ENCODE measurements at regions of chr2 and their contacts with region 1.

Region 1: DNA sequence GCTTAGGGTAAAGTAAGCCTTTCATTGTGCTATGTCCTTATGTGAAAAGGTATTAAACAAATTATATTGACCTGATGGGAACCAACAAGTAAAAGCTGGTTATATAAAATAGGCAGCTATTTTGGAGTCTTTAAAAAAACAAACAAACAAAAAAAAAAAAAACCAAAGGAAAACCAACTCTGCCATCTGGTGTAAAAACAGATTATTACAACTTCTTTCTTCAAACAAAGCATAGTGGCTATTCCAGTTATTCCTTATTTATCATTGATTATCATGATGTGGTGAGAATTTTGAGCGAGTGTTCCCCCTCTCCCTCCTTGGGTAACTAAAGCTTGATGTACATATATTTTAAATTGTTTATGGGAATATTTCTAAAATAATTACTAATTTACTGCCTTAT is 122.4 kb upstream of the FHL2 start:
- DNase-seq: peak; percentile 15
- ATAC-seq: peak; percentile 43
- H3K4me3 ChIP-seq: no peak overlapping the region
- H3K27ac ChIP-seq: no peak overlapping the region
- H3K4me1 ChIP-seq: peaks cover 2% of the 10 kb centered on the region; the same call in 1 of the 2 replicates
- H3K27me3 ChIP-seq: peaks cover 7% of the 10 kb centered on the region; the same call in 1 of the 2 replicates
- CTCF ChIP-seq: peak; percentile 62
- POLR2A ChIP-seq: no peak
- RAD21 ChIP-seq: peak; percentile 76

Region 2: DNA sequence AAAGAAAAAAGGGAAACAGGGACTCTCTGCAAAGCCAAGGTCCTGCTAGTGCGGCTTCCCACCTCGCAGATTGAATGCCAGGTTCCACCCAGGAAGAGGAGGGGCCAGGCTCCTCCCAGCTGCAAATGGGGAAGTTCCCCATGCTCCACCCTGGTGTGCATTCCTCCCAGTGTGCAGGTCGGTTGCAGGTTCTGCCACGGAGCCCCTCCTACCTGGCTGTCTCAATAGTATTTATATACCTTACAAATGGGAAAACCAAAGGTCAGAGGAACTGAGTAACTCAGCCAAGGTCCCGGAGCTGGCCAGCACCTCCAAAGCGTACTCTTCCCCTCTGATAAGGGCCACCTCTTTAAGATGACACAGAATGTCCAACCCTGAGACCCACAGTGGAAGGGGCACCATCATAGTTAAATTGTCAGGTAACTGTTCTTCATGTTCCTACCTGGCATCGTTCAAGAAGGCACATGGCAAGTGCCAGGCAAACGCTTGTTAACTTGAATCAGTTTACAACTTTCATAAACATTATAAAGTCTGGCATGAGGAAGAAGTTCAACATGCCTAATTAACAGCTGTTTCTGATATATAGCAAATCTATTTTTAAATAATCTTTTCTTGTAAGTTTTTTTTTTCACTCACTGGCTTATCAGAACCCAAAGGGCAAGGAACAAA is 631.8 kb before region 1 on chr2:
- CTCF ChIA-PET with region 1: no interaction called
- POLR2A ChIA-PET with region 1: no interaction called
- dilution Hi-C with region 1: no loop called
- in situ Hi-C with region 1: no loop called
- intact Hi-C with region 1: no loop called
- DNase-seq: no peak
- ATAC-seq: no peak
- H3K4me3 ChIP-seq: no peak overlapping the region
- H3K27ac ChIP-seq: no peak overlapping the region
- H3K4me1 ChIP-seq: no peaks in the 10 kb centered on the region
- H3K27me3 ChIP-seq: no peaks in the 10 kb centered on the region
- CTCF ChIP-seq: no peak
- POLR2A ChIP-seq: no peak
- RAD21 ChIP-seq: no peak

Region 3: DNA sequence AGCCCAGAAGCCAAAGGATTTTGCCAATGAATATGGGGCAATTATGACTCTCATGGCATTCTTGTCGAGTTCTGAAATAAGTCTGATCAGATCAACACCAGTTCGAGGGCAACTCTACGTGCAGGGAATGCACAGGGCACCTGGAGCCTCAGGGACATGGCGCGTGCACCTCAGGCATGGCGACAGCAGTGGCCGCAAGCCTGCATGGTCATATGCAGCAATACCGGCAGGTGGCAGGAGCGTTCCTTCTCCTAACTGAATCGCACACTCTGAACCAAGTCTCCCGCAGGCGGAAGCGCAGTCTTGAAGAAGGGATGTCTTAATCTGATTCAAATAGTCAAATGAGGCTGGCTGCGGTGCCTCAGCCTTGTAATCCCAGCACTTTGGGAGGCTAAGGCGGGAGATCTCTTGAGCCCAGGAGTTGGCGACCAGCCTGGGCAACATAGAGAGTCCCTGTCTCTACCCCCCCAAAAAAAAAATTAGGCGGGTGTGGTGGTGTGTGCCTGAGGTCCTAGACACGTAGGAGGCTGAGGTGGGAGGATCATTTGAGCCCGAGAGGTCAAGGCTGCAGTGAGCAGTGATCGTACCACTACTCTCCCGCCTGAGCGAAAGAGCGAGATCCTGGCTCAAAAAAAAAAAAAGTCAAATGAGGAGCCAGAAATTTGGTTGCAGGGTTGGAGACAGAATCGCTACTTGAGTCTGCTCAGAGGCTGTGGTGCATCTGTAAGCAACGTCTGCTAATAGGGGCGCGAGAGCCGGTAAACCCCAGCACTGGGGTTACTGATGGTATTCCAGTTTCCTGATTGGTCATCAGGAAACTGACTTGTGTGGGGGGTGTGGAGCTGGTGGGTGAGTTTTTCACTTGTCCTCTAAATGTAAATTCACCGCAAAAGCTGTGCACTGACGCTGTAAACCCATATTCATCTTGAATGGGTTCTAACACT is 151.2 kb before region 1 on chr2:
- CTCF ChIA-PET with region 1: interaction called, 9 read pairs
- POLR2A ChIA-PET with region 1: no interaction called
- dilution Hi-C with region 1: no loop called
- in situ Hi-C with region 1: loop called (anchors 5 kb)
- intact Hi-C with region 1: loop called (anchors 1 kb)
- DNase-seq: peak; percentile 86
- ATAC-seq: peak; percentile 50
- H3K4me3 ChIP-seq: no peak overlapping the region
- H3K27ac ChIP-seq: peak overlapping the region; percentile 35
- H3K4me1 ChIP-seq: peaks cover 31% of the 10 kb centered on the region
- H3K27me3 ChIP-seq: no peaks in the 10 kb centered on the region
- CTCF ChIP-seq: peak; percentile 76
- POLR2A ChIP-seq: no peak
- RAD21 ChIP-seq: peak; percentile 84

Region 4: DNA sequence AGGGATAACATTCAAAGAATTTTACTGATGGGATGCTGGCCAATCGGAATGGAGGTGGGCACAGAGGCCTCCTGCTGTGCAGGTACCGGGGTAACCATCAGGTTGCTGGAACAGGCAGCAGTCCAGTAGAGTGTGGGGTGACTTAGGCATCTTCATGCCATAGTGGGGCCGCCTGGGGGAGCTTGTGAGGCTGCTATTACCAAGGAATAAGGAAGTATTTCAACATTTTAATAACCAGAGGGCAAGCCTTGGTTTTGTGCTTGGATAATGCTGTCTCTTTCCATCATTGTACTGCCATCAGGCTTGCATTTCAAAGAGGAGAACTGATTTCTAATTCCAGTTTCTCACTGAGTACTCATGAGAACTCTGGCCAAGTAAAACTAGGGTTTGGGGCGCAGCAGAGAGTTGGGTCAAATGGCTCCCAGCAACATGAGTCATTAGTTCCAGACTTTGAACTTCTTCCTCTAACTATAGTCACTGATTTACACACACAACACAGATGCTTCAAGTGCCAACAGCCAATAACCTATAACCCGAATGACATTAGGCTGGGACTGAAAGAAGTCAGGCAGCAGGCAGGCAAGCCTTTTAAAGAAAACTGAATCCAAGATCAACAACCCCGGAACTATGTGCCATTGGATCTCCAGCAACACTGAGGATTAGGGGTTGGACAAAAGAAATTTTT is 66.3 kb before region 1 on chr2:
- CTCF ChIA-PET with region 1: no interaction called
- POLR2A ChIA-PET with region 1: no interaction called
- dilution Hi-C with region 1: no loop called
- in situ Hi-C with region 1: no loop called
- intact Hi-C with region 1: loop called (anchors 1 kb)
- DNase-seq: peak; percentile 61
- ATAC-seq: peak; percentile 67
- H3K4me3 ChIP-seq: no peak overlapping the region
- H3K27ac ChIP-seq: peak overlapping the region; percentile 20; the same call in 1 of the 2 replicates
- H3K4me1 ChIP-seq: peaks cover 10% of the 10 kb centered on the region
- H3K27me3 ChIP-seq: peaks cover 27% of the 10 kb centered on the region
- CTCF ChIP-seq: peak; percentile 37
- POLR2A ChIP-seq: no peak
- RAD21 ChIP-seq: no peak